ENCODE measurements at regions of chr15 and their contacts with region 1.

Region 1: DNA sequence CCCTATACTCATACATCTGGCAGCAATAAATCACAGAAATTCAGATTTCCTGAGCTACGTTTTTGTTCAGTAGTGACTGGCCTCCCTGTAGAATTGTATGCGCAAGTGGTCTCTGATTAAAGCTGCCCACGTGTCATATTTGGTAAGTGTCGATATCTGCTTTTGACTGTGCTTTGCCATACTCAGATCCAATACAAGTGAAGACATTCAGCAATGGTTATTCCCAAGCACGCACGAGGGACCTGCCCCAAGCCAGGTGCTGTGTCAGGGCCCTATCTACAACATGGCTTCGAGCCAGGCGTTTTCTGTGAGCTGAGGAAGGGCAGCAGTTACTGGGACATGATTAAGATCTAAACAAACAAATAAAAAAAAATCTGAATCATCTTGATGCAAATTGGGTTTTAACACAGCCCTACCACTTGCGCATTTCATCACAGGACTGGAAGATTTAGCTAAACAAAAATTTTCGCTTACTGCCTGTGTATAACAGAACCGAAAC is 47.2 kb upstream of the ICE2 start:
- DNase-seq: peak in 5 of 14 experiments; percentile 16 to 74 (median 41)
- ATAC-seq: peak; percentile 46
- H3K4me3 ChIP-seq: no peak overlapping the region
- H3K4me3 Mint-ChIP-seq: peak overlapping the region; percentile 39
- H3K27ac ChIP-seq: no peak overlapping the region
- H3K27ac Mint-ChIP-seq: peak overlapping the region; percentile 87
- H3K4me1 ChIP-seq: peaks cover 36% of the 10 kb centered on the region
- H3K4me1 Mint-ChIP-seq: peaks cover 84% of the 10 kb centered on the region
- H3K27me3 ChIP-seq: no peaks in the 10 kb centered on the region
- H3K27me3 Mint-ChIP-seq: no peaks in the 10 kb centered on the region
- CTCF ChIP-seq: no peak

Region 2: GRCh38 chr15:60541481-60542299 is 15.5 kb after region 1 on chr15:
- CTCF ChIA-PET with region 1: interaction called, 10 read pairs
- POLR2A ChIA-PET with region 1: interaction called, 4 read pairs
- intact Hi-C with region 1: loop called in 1 of 2 experiments (anchors 2 kb)
- DNase-seq: no peak
- ATAC-seq: no peak
- H3K4me3 ChIP-seq: no peak overlapping the region
- H3K4me3 Mint-ChIP-seq: peak overlapping the region; percentile 57
- H3K27ac ChIP-seq: peak overlapping the region in 1 of 2 donors; percentile 50
- H3K27ac Mint-ChIP-seq: peak overlapping the region; percentile 85
- H3K4me1 ChIP-seq: peaks cover 62% of the 10 kb centered on the region
- H3K4me1 Mint-ChIP-seq: peaks cover 100% of the 10 kb centered on the region
- H3K27me3 ChIP-seq: no peaks in the 10 kb centered on the region
- H3K27me3 Mint-ChIP-seq: no peaks in the 10 kb centered on the region
- CTCF ChIP-seq: no peak

Region 3: GRCh38 chr15:61038387-61038786 is 512.2 kb after region 1 on chr15:
- CTCF ChIA-PET with region 1: no interaction called
- POLR2A ChIA-PET with region 1: no interaction called
- intact Hi-C with region 1: no loop called
- DNase-seq: peak in 1 of 14 experiments; percentile 5
- ATAC-seq: no peak
- H3K4me3 ChIP-seq: no peak overlapping the region
- H3K4me3 Mint-ChIP-seq: no peak overlapping the region
- H3K27ac ChIP-seq: no peak overlapping the region
- H3K27ac Mint-ChIP-seq: no peak overlapping the region
- H3K4me1 ChIP-seq: no peaks in the 10 kb centered on the region
- H3K4me1 Mint-ChIP-seq: no peaks in the 10 kb centered on the region
- H3K27me3 ChIP-seq: peaks cover 0 to 7% of the 10 kb centered on the region in 2 experiments
- H3K27me3 Mint-ChIP-seq: peaks cover 46% of the 10 kb centered on the region
- CTCF ChIP-seq: no peak

Measured in CD4-positive, alpha-beta T cell (primary cell).